Cardiac septum (tissue), 1 donor: ENCODE measurements at regions of chr7 and their contacts with region 1.

Region 1: GRCh38 chr7:14834456-14834855 is 68.1 kb downstream of the DGKB start:
- DNase-seq: no peak

Region 2: DNA sequence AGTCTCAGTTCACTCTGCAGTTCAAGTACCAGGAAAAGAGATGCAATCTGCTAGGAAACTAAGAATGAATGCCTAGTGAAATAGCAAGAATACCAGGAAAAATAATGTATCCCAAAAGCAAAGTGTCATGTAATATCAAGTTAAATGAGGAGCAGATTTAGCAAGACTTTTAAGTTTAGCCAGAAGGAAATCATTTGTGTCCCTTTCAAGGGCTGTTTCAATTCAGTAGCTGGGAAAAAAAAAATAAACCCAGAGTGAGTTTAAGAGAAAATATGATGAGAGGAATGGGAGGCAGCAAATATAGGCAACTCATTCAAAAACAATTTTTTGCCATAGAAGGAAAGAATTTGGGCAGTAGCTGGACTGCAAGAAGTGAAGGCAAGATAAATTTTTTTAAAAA is 67.7 kb before region 1 on chr7:
- intact Hi-C with region 1: loop called (anchors 5 kb)
- DNase-seq: no peak

Region 3: GRCh38 chr7:14908697-14909096 is 74.2 kb after region 1 on chr7:
- intact Hi-C with region 1: no loop called
- DNase-seq: no peak